ENCODE measurements at regions of chr14 and their contacts with region 1.

Region 1: DNA sequence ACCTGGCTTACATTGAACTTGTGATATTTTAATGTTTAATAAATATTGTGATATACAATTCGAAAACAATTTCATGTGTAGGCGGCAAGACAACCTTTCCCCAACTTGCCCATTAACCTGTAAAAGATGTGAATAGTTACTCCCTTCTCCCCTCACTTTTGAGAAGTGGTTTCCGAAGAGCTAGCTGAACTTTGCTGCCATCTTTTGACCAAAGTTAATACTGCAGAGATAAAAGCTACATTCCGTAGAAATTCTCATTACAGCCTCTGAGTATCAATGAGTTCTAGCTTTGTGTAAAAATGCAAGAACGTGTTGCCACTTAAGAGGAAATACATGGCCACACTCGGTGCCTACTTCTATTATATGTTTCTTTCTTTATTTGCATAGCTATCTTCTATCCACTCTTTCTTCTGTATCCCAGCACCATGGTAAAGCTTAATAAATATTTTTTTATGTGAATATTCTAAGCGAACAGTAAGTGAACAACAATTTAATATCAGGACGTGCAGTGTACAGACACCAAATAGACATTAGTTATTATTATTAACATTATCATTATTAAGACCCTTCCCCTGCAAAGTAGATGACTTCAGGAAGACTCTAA is 105.1 kb upstream of the TMEM260 start:
- DNase-seq: no peak
- ATAC-seq: peak; percentile 26 to 41

Region 2: DNA sequence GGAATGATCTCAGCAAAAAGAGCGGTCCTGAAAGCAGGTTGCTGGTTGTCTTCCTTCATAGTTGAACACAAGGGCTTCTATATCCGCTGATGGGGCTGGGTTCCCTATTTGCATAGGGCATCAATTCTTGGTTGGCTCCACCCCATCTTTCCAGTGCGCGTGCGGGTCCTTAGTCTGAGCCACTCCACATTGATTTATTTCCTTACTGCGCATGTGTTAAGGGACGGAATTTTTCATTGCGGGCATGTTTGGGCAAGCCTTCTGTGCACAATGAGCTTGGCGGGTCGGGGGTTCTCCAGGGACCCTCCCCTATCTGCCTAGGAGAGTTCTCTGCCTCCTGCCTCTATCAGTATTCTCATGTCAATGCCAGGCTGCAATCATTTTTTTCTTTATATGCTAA is 1261.9 kb before region 1 on chr14:
- intact Hi-C with region 1: loop called in 1 of 2 experiments (anchors 10 kb)
- DNase-seq: no peak
- ATAC-seq: no peak

Region 3: GRCh38 chr14:55446218-55446654 is 1028.3 kb before region 1 on chr14:
- intact Hi-C with region 1: loop called in 1 of 2 experiments (anchors 5 kb)
- DNase-seq: peak; percentile 48
- ATAC-seq: peak; percentile 58 to 69

Region 4: DNA sequence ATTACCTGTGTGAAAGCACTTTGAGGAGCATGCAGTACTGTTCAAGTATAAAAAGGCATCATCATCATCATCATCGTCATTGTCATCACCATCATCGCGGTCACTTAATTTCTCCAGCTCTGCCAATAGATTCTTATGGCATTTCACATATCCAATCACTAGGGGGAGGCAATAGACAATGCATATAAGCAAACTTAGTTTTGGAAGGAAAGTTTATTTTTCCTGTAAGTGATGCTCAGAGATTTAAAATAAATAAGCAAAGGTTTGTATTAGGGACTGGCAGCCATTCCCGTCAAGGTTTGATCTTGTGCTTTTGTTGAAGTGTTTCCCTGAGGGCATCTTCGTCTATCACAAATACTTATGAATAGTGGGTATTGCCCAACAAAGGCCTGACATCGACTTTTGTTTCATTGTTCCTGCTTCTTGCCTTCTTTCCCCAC is 767.1 kb before region 1 on chr14:
- intact Hi-C with region 1: loop called in 1 of 2 experiments (anchors 2 kb)
- DNase-seq: no peak
- ATAC-seq: peak in 1 of 2 donors; percentile 34

Region 5: GRCh38 chr14:55731881-55732498 is 742.5 kb before region 1 on chr14:
- intact Hi-C with region 1: loop called (anchors 5 to 10 kb)
- DNase-seq: no peak
- ATAC-seq: peak in 1 of 2 donors; percentile 18

Measured in left cardiac atrium (tissue), 4 donors.